HEK293T (cell line): ENCODE measurements at regions of chr14 and their contacts with region 1.

Region 1: DNA sequence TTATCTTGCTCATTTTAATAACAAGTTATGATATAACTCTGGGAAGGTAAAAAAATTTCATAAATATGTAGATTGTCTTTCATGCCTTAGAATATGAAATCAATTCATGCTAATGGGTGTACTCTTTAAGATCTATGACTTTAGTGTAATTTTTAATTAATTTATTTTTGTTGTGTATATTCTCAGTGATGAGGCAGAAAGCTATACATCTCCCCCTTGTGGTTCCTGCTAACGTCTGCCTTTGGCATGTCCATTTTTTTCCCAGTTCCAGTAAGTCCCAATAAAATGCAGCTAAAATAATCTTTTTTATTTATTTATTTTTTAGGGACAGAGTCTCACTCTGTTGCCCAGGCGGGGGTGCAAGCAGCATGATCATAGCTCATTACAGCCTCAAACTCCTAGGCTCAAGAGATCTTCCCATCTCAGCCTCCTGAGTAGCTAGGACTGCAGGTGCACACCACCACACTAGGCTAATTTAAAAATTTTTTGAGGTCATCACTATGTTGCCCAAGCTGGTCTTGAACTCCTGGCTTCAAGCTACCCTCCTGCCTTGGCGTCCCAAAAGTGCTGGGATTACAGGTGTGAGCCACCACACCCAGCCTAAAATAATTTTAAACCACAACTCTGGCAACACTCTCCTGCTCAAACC is 3.3 kb upstream of the CHURC1 start:
- DNase-seq: peak; percentile 29

Region 2: GRCh38 chr14:64400829-64401459 is 510.0 kb before region 1 on chr14:
- CTCF ChIA-PET with region 1: no interaction called
- POLR2A ChIA-PET with region 1: no interaction called
- DNase-seq: no peak

Region 3: DNA sequence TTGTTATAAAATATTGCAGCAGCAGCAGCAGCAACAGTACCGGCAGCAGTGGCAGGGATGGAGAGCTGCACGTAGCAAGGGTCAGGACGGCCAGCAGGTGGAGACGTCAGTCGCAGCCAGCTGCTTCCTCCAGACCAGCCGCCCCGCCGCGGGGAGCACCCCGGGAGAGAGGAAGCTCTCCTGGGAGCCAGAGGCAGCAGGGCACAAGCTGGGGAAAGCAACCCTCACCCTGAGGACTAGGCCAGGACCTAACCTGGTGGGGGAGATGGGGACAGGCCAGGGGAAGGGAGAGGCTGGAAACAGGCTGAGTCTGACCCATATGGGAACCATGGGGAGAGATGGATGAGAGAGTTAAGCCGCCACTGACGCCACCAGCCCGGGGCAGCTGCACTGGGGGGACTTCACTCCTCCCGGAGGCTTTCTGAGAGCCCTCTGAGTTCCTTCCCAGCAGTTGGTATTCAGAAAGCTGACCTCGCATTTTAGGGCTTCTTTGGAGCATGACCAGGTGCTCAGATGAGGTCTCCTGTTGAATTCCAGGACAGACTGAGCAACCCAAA is 87.6 kb before region 1 on chr14:
- CTCF ChIA-PET with region 1: interaction called, 10 read pairs
- POLR2A ChIA-PET with region 1: interaction called, 3 read pairs
- DNase-seq: peak; percentile 89

Region 4: DNA sequence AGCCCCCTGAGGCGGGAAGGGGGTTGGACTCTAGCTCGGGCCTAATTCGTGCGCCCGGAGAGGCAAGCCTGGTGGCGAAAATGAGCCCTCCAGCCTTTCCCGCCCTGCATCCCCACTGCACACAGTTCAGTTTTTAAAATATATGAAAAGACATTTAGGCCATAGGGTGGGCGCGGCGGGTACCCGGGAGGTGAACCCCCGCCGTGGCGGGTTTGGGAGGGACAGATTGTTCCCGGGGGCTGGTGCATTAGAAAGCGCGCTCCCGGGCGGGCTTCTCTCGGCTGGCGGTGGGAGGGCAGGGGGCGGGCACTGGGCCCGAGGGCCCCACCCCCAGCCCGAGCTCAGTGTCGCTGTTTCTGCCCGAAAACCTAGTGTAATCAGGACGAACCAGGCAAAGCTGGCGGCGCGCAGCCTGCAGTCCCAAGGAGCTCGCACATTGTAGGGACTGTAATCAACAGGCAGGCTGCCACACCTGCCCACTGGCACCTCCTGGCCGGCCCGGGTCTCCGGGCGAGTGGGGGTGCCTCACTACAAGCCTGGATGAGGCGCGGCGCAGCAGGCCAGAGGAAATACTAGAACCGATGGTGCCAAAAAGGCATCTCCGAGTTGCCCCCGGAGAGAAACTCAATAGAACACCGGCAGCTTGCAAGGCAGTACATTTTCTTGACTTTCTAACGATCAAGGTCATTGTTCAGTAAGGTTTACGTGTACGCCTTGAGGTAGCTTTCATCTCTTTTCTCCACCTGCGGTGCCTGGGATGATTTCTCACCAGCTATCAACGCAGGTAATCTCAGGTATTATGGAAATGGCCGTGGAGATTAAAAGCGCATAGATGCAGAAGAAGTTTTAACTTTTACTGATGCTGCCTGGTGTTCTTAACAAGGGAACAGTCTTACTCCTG is 30.5 kb before region 1 on chr14:
- CTCF ChIA-PET with region 1: interaction called, 27 read pairs
- POLR2A ChIA-PET with region 1: interaction called, 3 read pairs
- DNase-seq: peak; percentile 77

Region 5: GRCh38 chr14:64937821-64938193 is 26.8 kb after region 1 on chr14:
- CTCF ChIA-PET with region 1: interaction called, 11 read pairs
- POLR2A ChIA-PET with region 1: interaction called, 3 read pairs
- DNase-seq: no peak